ENCODE measurements at regions of chr5 and their contacts with region 1.

Region 1: GRCh38 chr5:92695123-92696003 is 885.7 kb downstream of the NR2F1-AS1 start:
- DNase-seq: no peak
- H3K4me3 ChIP-seq: no peak overlapping the region
- H3K27ac ChIP-seq: no peak overlapping the region
- H3K4me1 ChIP-seq: no peaks in the 10 kb centered on the region
- H3K27me3 ChIP-seq: no peaks in the 10 kb centered on the region
- CTCF ChIP-seq: no peak

Region 2: GRCh38 chr5:93926831-93927620 is 1231.7 kb after region 1 on chr5:
- intact Hi-C with region 1: loop called (anchors 10 kb)
- DNase-seq: no peak
- H3K4me3 ChIP-seq: no peak overlapping the region
- H3K27ac ChIP-seq: no peak overlapping the region
- H3K4me1 ChIP-seq: peaks cover 0 to 2% (median 0%) of the 10 kb centered on the region in 4 donors
- H3K27me3 ChIP-seq: no peaks in the 10 kb centered on the region
- CTCF ChIP-seq: no peak

Measured in tibial artery (tissue), 4 donors.